GM10248 (cell line): ENCODE measurements at regions of chr21 and their contacts with region 1.

Region 1: DNA sequence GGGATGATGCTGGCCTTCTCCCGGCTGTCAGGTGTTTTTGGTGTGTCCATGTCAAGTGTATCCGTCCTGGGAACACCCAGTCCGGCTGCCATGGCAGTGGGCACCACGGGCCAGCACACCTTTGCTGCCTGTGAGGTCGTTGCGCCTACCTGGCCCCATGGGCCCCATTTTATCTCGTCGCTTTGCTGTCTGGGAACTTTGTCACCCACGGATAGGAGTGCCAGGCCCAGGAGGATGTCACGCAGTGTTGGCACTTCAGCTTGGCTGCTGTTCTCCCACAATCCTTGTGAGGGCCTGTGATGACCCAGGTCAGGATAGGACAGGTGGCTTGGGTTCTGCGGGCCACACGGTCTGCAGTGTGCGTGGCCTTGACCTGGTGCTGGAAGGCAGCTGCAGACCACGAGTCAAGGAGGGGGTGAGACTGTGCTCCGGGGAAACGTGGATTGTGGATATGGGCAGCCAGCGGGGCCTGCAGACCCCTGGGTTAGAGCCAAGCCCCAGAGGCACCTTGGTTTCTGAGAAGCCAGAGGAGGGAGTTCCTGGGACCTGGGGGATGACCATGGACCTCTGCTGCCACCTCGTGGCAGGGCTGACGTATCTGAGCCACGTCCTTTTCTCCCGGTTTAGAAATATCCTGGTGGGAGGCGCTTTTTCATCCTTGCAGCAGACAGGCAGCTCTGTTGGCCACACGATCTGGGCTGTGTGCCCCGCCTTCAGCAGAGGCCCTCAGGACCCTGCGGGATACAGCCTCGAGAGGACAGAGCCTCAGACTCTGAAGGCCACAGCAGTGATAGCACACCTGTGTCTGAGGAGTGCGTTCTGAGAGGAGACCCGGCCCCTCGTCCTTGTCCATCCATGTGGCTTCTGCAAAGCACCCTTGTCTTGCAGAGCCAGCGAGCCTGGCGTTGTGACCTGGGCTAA is 161.1 kb upstream of the COL6A1 start:
- DNase-seq: peak; percentile 89
- CTCF ChIP-seq: peak; percentile 85

Region 2: DNA sequence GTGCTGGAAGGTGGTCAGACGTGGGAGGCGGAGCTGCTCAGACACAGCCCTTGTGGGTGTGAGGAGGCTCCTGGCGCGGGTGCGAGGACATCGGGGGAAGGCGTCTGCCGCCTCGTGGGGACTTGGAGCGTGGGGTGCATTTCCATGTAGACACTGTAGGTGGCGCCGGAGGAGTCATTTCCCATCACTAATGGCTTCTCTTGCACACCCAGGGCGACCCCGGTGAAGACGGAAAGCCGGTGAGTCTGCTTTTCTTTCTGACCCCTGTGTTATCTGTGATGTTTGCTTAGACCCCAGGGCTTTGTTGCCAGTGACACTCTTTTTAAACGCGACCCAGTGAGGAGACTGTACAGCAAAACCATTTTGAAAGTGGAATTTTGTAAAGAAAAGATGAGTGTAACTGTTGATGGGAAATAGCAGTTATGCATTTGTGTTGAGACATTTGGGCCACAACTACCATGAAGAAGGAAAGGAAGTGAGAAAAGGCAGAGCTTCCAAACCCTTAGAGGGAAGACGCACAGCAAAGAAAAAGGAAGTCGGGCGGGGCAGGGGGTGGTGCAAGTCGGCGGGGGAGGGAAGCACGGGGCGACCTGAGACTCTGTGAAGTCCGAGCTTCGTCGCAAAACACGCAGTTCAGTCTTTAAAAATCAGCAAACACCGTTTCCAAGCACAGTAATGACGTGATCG is 342.2 kb before region 1 on chr21:
- CTCF ChIA-PET with region 1: interaction called, 16 read pairs
- POLR2A ChIA-PET with region 1: no interaction called
- DNase-seq: peak; percentile 86
- CTCF ChIP-seq: peak; percentile 84

Region 3: GRCh38 chr21:45800339-45801080 is 19.9 kb before region 1 on chr21:
- CTCF ChIA-PET with region 1: no interaction called
- POLR2A ChIA-PET with region 1: no interaction called
- DNase-seq: no peak
- CTCF ChIP-seq: no peak

Region 4: GRCh38 chr21:45865106-45865832 is 44.8 kb after region 1 on chr21:
- CTCF ChIA-PET with region 1: no interaction called
- POLR2A ChIA-PET with region 1: no interaction called
- DNase-seq: no peak
- CTCF ChIP-seq: no peak

Region 5: GRCh38 chr21:45957981-45958600 is 137.7 kb after region 1 on chr21:
- CTCF ChIA-PET with region 1: no interaction called
- POLR2A ChIA-PET with region 1: no interaction called
- DNase-seq: no peak
- CTCF ChIP-seq: no peak